CD14-positive monocyte (primary cell): ENCODE measurements at regions of chr2 and their contacts with region 1.

Region 1: GRCh38 chr2:95165129-95166064 is at the start of gene ZNF2:
- DNase-seq: peak; percentile 94 to 97 (median 96)
- H3K4me3 ChIP-seq: peak within 1 kb of the TSS; percentile 78 to 97 (median 96)
- H3K4me3 Mint-ChIP-seq: peak within 1 kb of the TSS; percentile 99 to 100
- H3K27ac ChIP-seq: peak within 1 kb of the TSS; percentile 92 to 99
- H3K27ac Mint-ChIP-seq: peak within 1 kb of the TSS; percentile 95 to 97 (median 97)
- H3K4me1 ChIP-seq: peaks cover 14 to 16% of the 10 kb centered on the region in 2 donors
- H3K4me1 Mint-ChIP-seq: peaks cover 15% of the 10 kb centered on the region
- H3K27me3 ChIP-seq: no peaks in the 10 kb centered on the region
- H3K27me3 Mint-ChIP-seq: peaks cover 0 to 6% (median 0%) of the 10 kb centered on the region in 3 donors
- CTCF ChIP-seq: no peak
- polyA plus RNA-seq, gene ZNF2: 0.59 to 1.5 (median 0.89) TPM

Region 2: GRCh38 chr2:95012881-95013550 is 152.4 kb before region 1 on chr2:
- intact Hi-C with region 1: no loop called
- DNase-seq: no peak
- H3K4me3 ChIP-seq: no peak overlapping the region
- H3K4me3 Mint-ChIP-seq: no peak overlapping the region
- H3K27ac ChIP-seq: no peak overlapping the region
- H3K27ac Mint-ChIP-seq: no peak overlapping the region
- H3K4me1 ChIP-seq: no peaks in the 10 kb centered on the region
- H3K4me1 Mint-ChIP-seq: peaks cover 2% of the 10 kb centered on the region
- H3K27me3 ChIP-seq: no peaks in the 10 kb centered on the region
- H3K27me3 Mint-ChIP-seq: peaks cover 2 to 3% (median 2%) of the 10 kb centered on the region in 3 donors
- CTCF ChIP-seq: no peak

Region 3: DNA sequence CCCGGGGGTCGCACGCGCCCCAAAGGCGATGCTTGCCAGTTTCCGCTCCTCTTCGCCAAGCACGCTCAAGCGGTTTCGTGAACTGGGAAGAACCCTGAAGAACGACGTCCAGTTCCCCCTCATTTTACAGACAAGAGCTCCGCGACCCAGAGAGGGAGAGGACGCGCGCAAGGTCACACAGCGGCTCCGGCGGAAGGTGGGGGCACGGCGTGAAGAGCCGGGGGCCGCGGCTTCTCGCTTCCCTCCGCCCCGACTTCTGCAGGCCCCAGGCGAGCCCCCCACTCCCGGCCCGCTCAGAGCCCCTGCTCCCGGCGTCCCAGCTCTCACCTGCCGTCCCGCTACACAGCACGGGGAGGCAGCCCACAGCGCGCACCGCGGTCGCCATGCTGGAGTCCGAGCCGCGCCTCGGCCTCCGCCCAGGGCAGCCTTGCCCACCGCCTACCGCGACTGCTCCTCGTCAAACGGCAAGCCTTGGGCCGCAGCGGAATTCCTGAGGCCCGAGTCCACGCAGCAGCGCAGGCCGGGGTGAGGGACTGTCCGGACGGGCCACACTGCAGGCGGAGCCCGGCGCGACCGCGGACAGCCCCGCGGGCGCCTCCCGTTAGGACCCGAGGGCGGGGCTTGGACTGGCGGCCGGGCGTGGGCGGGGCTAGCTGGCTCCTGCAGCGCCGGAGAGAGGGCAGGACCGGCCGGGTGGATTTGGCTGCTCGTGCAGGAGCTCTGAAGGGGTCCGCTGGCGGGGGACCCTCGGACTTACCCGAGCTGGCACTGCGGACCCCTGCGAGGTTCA is 43.8 kb before region 1 on chr2 and contains the start of gene MRPS5:
- intact Hi-C with region 1: loop called (anchors 2 to 5 kb)
- DNase-seq: peak; percentile 58 to 60 (median 59)
- H3K4me3 ChIP-seq: peak within 1 kb of the TSS; percentile 85 to 96 (median 95)
- H3K4me3 Mint-ChIP-seq: peak within 1 kb of the TSS; percentile 94 to 97
- H3K27ac ChIP-seq: peak within 1 kb of the TSS; percentile 74 to 93
- H3K27ac Mint-ChIP-seq: peak within 1 kb of the TSS; percentile 89 to 95 (median 93)
- H3K4me1 ChIP-seq: peaks cover 23 to 37% of the 10 kb centered on the region in 2 donors
- H3K4me1 Mint-ChIP-seq: peaks cover 41% of the 10 kb centered on the region
- H3K27me3 ChIP-seq: no peaks in the 10 kb centered on the region
- H3K27me3 Mint-ChIP-seq: peaks cover 1 to 3% (median 1%) of the 10 kb centered on the region in 3 donors
- CTCF ChIP-seq: no peak
- polyA plus RNA-seq, gene MRPS5: 30.9 to 41.6 (median 35.2) TPM

Region 4: GRCh38 chr2:95207111-95207961 is 41.9 kb after region 1 on chr2 and contains the start of gene ZNF892:
- intact Hi-C with region 1: loop called (anchors 5 kb)
- DNase-seq: peak; percentile 60 to 74 (median 61)
- H3K4me3 ChIP-seq: peak within 1 kb of the TSS; percentile 61 to 84 (median 82)
- H3K4me3 Mint-ChIP-seq: peak within 1 kb of the TSS; percentile 85 to 92
- H3K27ac ChIP-seq: peak within 1 kb of the TSS; percentile 72 to 78
- H3K27ac Mint-ChIP-seq: peak within 1 kb of the TSS; percentile 29 to 89 (median 81)
- H3K4me1 ChIP-seq: peaks cover 12 to 18% of the 10 kb centered on the region in 2 donors
- H3K4me1 Mint-ChIP-seq: peaks cover 15% of the 10 kb centered on the region
- H3K27me3 ChIP-seq: no peaks in the 10 kb centered on the region
- H3K27me3 Mint-ChIP-seq: peaks cover 0 to 7% (median 1%) of the 10 kb centered on the region in 3 donors
- CTCF ChIP-seq: peak; percentile 36
- polyA plus RNA-seq, gene ZNF892: 0.15 to 0.73 (median 0.23) TPM

Region 5: DNA sequence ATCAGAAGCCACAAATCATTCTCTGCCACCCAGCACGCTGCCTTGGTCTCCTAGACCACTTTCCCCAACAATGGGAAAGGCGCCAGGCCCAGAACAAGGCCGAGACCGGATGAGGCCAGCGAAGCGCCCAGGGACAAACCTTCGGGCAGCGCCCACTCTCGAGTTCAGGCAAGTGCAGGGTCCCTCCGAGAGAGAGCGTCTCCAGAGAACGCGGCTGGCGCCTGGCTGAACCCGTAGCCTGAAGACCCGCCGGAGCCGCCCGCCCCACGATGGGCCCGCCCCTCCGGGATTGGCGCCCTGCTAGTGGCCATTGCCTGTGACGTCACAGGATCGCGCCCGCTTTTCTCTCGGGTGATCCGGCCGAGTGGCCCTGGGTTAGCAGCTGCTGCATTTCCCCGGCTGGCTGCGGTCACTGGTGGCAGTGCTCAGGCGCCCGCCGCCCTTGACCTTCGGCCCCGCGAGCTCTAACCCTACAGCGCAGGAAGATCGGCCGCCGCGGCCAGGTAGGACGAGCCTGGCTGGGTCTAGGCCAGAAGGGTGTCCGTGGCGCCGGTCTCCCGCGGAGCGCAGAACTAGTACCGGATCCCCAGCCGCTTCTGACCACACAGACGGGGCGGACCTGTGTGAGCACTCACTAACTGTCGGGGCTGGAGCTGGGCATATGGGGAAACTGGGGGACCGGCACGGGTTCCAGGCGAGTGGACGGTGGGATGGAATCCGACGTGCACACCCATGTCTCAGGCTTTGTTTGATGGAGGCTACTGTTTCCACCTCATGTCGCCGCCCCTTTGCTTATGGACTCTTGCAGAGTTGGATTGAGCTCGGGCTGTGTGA is 237.2 kb after region 1 on chr2 and contains the start of gene FAHD2A:
- intact Hi-C with region 1: loop called (anchors 2 to 5 kb)
- DNase-seq: peak; percentile 87 to 93 (median 89)
- H3K4me3 ChIP-seq: peak within 1 kb of the TSS; percentile 62 to 93 (median 93)
- H3K4me3 Mint-ChIP-seq: peak within 1 kb of the TSS; percentile 98
- H3K27ac ChIP-seq: peak within 1 kb of the TSS; percentile 78 to 87
- H3K27ac Mint-ChIP-seq: peak within 1 kb of the TSS; percentile 92 to 97 (median 95)
- H3K4me1 ChIP-seq: peaks cover 17% of the 10 kb centered on the region in 2 donors
- H3K4me1 Mint-ChIP-seq: peaks cover 22% of the 10 kb centered on the region
- H3K27me3 ChIP-seq: no peaks in the 10 kb centered on the region
- H3K27me3 Mint-ChIP-seq: peaks cover 0 to 3% (median 1%) of the 10 kb centered on the region in 3 donors
- CTCF ChIP-seq: no peak
- polyA plus RNA-seq, gene FAHD2A: 9.7 to 17.1 (median 10.5) TPM